AG04449 (cell line): ENCODE measurements at regions of chr4 and their contacts with region 1.

Region 1: GRCh38 chr4:110516106-110516922 is 40.4 kb downstream of the ENPEP start:
- DNase-seq: no peak
- H3K4me3 ChIP-seq: peak overlapping the region; percentile 43
- CTCF ChIP-seq: peak; percentile 74

Region 2: GRCh38 chr4:109990261-109991257 is 525.8 kb before region 1 on chr4:
- CTCF ChIA-PET with region 1: interaction called, 1,033 read pairs
- POLR2A ChIA-PET with region 1: no interaction called
- DNase-seq: no peak
- H3K4me3 ChIP-seq: no peak overlapping the region
- CTCF ChIP-seq: no peak

Region 3: GRCh38 chr4:110013904-110014632 is 502.2 kb before region 1 on chr4:
- CTCF ChIA-PET with region 1: interaction called, 1,033 read pairs
- POLR2A ChIA-PET with region 1: no interaction called
- DNase-seq: no peak
- H3K4me3 ChIP-seq: no peak overlapping the region
- CTCF ChIP-seq: no peak

Region 4: DNA sequence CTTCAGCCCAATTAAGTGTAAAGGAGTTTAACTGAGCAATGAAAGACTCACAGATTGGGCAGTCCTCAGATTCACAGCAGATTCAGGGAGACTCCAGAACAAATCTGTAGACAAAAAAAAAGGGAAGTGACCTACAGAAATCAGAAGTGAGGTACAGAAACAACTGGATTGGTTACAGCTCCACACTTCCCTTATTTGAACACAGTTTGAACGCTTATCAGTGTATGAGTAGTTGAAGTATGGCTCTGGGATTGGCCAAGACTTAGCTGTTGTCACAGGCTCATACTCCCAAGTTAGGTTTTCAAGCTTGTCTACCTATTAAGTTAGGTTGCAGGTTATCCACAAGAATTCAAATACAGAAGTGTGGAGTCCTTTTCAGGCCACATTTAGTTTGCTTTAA is 205.5 kb before region 1 on chr4:
- CTCF ChIA-PET with region 1: interaction called, 154 read pairs
- POLR2A ChIA-PET with region 1: no interaction called
- DNase-seq: no peak
- H3K4me3 ChIP-seq: no peak overlapping the region
- CTCF ChIP-seq: no peak

Region 5: GRCh38 chr4:110372485-110372884 is 143.8 kb before region 1 on chr4:
- CTCF ChIA-PET with region 1: no interaction called
- POLR2A ChIA-PET with region 1: no interaction called
- DNase-seq: no peak
- H3K4me3 ChIP-seq: no peak overlapping the region
- CTCF ChIP-seq: no peak

Region 6: DNA sequence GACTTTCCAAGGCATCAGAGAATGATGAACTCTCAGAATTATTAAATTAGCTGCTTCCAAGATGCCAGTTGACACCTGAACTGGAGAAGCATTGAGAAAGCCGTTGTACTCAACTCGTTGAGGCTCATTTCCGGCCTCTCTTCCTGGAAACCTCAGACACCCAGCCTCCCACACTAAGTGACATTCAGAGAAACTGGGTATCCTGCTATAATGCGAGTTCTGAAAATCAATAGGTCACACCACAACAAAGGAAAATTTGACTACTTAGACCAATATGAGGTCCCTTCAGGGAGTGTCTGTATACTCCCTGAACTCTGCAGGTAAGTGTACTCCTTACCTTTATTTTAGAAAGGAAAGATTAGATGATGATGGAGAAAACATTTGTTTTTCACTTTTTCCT is 10.8 kb after region 1 on chr4:
- CTCF ChIA-PET with region 1: interaction called, 41 read pairs
- POLR2A ChIA-PET with region 1: no interaction called
- DNase-seq: no peak
- H3K4me3 ChIP-seq: no peak overlapping the region
- CTCF ChIP-seq: no peak

Region 7: DNA sequence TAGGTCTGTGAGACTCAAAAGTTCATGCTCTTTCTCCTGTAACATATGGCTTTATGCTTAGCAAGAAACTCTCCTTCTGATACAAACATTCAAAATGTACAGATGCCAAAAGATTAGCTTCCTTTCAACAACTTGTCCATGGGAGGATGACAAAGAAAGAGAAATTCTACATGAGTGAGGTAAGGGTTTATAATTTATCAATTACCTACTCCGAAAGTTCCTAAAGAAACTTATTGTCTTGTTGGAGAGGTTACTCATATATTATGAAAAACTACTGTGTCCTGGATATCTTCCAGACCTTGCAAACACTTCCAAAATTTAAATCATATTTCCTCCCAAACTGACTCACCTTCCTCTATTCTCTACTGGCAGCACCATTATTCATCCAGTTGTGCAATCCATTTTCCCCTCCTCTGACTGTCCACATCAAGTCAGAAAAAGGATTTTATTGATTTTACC is 24.7 kb after region 1 on chr4:
- CTCF ChIA-PET with region 1: interaction called, 13 read pairs
- POLR2A ChIA-PET with region 1: no interaction called
- DNase-seq: peak; percentile 5
- H3K4me3 ChIP-seq: no peak overlapping the region
- CTCF ChIP-seq: no peak

Region 8: DNA sequence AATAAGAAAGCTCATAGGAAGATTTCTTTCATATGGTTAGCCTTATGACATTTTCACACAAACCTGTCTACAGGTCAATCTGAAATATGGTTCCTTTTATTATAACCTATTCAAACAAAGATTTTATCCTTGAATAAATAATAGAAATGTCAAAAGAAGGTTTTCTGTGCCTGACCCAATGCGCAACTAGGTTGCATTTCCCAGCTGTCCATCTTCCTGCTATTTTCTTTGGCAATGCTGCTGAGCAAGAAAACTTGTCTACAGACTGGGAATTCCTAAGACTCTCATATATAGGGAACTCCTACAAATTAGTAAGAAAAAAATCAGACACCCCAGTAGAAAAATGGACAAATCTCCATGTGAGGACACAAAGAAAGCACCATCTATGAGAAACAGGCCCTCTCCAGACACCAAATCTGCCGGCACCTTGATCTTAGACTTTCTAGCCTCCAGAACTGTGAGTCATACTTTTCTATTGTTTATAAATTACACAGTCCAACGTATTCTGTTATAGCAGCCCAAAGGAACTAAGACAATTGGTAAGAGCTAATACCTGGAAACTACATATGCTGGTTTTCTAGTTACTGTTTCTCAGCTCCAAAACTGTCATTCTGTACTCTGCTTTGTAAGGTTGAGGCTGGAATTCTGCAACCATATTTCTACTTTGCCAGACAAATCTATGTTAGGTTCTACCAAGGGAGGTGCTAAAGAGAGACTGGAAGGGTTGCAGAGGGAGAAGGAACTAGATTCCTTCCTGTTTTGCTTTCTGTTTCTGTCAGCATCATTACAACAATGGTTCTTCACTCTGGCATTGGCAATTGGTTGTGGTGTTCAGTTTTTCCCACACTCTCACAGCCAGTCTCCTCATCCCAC is 1593.1 kb after region 1 on chr4:
- CTCF ChIA-PET with region 1: no interaction called
- POLR2A ChIA-PET with region 1: no interaction called
- DNase-seq: no peak
- H3K4me3 ChIP-seq: no peak overlapping the region
- CTCF ChIP-seq: no peak